Natural killer cell (primary cell): ENCODE measurements at regions of chr9 and their contacts with region 1.

Region 1: GRCh38 chr9:21965401-21965951 is 28.7 kb downstream of the CDKN2A start:
- DNase-seq: peak in 1 of 2 donors; percentile 68
- ATAC-seq: peak; percentile 58 to 66 (median 60)
- H3K4me3 ChIP-seq: no peak overlapping the region
- H3K4me3 Mint-ChIP-seq: peak overlapping the region; percentile 61
- H3K27ac ChIP-seq: no peak overlapping the region
- H3K27ac Mint-ChIP-seq: peak overlapping the region in 1 of 2 donors; percentile 54
- H3K4me1 ChIP-seq: peaks cover 26% of the 10 kb centered on the region
- H3K4me1 Mint-ChIP-seq: peaks cover 28 to 38% of the 10 kb centered on the region in 2 donors
- H3K27me3 ChIP-seq: peaks cover 86% of the 10 kb centered on the region
- H3K27me3 Mint-ChIP-seq: peaks cover 82 to 96% of the 10 kb centered on the region in 2 donors
- CTCF ChIP-seq: no peak

Region 2: GRCh38 chr9:21812946-21813568 is 152.4 kb before region 1 on chr9:
- intact Hi-C with region 1: no loop called
- DNase-seq: peak; percentile 70 to 85
- ATAC-seq: peak; percentile 81 to 89 (median 83)
- H3K4me3 ChIP-seq: no peak overlapping the region
- H3K4me3 Mint-ChIP-seq: no peak overlapping the region
- H3K27ac ChIP-seq: no peak overlapping the region
- H3K27ac Mint-ChIP-seq: no peak overlapping the region
- H3K4me1 ChIP-seq: peaks cover 8% of the 10 kb centered on the region
- H3K4me1 Mint-ChIP-seq: peaks cover 5 to 6% of the 10 kb centered on the region in 2 donors
- H3K27me3 ChIP-seq: no peaks in the 10 kb centered on the region
- H3K27me3 Mint-ChIP-seq: no peaks in the 10 kb centered on the region
- CTCF ChIP-seq: peak; percentile 83

Region 3: GRCh38 chr9:21985964-21986667 is 20.6 kb after region 1 on chr9:
- intact Hi-C with region 1: loop called (anchors 2 kb)
- DNase-seq: no peak
- ATAC-seq: no peak
- H3K4me3 ChIP-seq: no peak overlapping the region
- H3K4me3 Mint-ChIP-seq: no peak overlapping the region
- H3K27ac ChIP-seq: no peak overlapping the region
- H3K27ac Mint-ChIP-seq: no peak overlapping the region
- H3K4me1 ChIP-seq: no peaks in the 10 kb centered on the region
- H3K4me1 Mint-ChIP-seq: peaks cover 11 to 21% of the 10 kb centered on the region in 2 donors
- H3K27me3 ChIP-seq: peaks cover 59% of the 10 kb centered on the region
- H3K27me3 Mint-ChIP-seq: peaks cover 48 to 84% of the 10 kb centered on the region in 2 donors
- CTCF ChIP-seq: no peak

Region 4: DNA sequence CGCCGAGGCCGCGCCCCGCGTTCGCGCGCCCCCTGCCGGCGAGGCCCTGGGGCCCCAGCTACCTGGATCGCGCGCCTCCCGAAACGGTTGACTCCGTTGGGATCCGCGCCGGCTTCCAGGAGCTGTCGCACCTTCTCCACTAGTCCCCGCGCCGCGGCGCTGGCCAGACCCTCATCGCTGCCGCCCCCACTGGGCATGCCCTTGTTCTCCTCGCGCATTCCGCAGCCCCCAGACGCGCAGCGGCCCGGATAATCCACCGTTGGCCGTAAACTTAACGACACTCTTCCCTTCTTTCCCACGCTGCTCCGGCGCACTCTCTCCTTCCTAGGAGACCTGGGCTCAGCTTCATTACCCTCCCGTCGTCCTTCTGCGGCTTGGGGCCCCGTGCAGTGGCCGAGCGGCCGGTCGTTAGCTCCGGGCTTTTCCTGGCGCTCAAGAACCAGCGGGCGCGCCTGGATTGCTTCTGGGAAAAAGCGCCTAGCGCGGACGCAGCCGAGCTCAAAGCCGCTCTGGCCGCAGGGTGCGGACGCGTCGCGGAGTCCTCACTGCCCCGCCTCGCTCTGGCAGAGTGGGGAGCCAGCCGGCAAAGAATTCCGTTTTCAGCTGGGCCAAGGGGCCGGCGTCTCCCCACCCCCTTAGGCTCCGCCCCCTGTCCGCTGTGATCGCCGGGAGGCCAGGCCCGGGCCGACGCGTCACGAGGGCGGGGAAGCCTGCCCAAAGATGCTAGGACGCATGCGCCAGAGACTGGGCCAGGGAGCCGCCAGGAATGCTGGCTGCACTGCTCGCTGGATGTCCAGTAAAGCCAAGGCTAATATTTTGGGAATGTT is 43.5 kb after region 1 on chr9 and contains the start of gene CDKN2B:
- intact Hi-C with region 1: loop called (anchors 5 kb)
- DNase-seq: peak; percentile 68 to 82
- ATAC-seq: peak; percentile 72 to 81 (median 79)
- H3K4me3 ChIP-seq: peak within 1 kb of the TSS; percentile 72
- H3K4me3 Mint-ChIP-seq: peak within 1 kb of the TSS; percentile 89
- H3K27ac ChIP-seq: no peak within 1 kb of the TSS
- H3K27ac Mint-ChIP-seq: peak within 1 kb of the TSS in 1 of 2 donors; percentile 45
- H3K4me1 ChIP-seq: peaks cover 23% of the 10 kb centered on the region
- H3K4me1 Mint-ChIP-seq: peaks cover 21 to 32% of the 10 kb centered on the region in 2 donors
- H3K27me3 ChIP-seq: peaks cover 60% of the 10 kb centered on the region
- H3K27me3 Mint-ChIP-seq: peaks cover 40 to 42% of the 10 kb centered on the region in 2 donors
- CTCF ChIP-seq: peak; percentile 95
- total RNA-seq, gene CDKN2B: 0.16 to 0.30 TPM in 2 of 3 donors, not detected in the other

Region 5: DNA sequence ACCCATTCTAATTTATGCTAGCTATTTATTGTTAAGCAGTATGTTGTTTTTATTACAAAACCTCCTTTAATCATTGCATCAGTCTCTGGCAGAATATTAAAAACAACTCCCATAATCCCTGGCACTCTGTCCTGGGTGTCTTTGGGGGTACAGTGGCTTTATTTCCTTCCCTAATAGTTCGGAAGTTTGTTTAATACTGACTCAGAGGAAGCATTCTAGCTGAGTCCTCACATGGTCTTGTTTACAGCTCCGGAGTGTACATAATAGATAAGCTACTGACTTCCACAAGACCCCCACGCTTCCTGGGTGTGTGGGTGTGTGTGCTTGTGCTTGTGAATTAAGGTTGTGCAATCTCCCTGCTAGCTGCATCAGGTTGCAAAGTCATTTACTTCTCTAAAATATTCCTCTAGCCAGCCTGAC is 193.5 kb after region 1 on chr9:
- intact Hi-C with region 1: no loop called
- DNase-seq: no peak
- ATAC-seq: no peak
- H3K4me3 ChIP-seq: no peak overlapping the region
- H3K4me3 Mint-ChIP-seq: no peak overlapping the region
- H3K27ac ChIP-seq: no peak overlapping the region
- H3K27ac Mint-ChIP-seq: no peak overlapping the region
- H3K4me1 ChIP-seq: no peaks in the 10 kb centered on the region
- H3K4me1 Mint-ChIP-seq: no peaks in the 10 kb centered on the region
- H3K27me3 ChIP-seq: no peaks in the 10 kb centered on the region
- H3K27me3 Mint-ChIP-seq: peaks cover 0 to 2% of the 10 kb centered on the region in 2 donors
- CTCF ChIP-seq: no peak